ENCODE measurements at regions of chr12 and their contacts with region 1.

Region 1: DNA sequence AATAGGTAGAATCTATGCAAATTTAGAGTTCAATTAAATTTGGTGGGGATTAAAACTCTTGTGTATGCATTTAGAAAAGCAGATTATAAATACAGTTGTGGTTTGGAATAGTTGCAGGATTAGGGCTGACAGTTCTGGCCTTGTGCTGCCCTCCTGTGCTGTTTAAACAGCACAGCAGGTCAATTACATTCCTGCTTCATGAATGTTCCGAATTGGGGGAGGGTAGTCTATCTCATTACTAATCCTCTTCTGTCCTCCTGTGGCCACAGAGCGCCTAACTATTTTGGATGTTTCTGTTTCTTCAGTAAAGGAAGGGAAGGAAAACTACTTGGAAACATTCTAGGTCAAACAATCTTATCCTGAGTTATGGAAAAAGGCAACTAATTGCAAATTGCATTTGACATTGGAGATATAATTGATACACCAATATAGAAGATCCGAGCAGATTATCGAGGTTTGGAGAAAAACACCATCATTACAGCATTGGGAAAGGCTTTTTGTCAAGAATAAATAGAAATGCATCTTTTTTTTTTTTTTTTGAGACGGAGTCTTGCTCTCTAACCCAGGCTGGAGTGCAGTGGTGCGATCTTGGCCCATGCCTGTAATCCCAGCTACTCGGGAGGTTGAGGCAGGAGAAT is 8.7 kb upstream of the GPR19 start:
- DNase-seq: peak; percentile 84
- H3K4me3 ChIP-seq: no peak overlapping the region
- H3K27ac ChIP-seq: no peak overlapping the region
- H3K4me1 ChIP-seq: peaks cover 5% of the 10 kb centered on the region
- H3K27me3 ChIP-seq: no peaks in the 10 kb centered on the region
- CTCF ChIP-seq: peak; percentile 99 to 100

Region 2: GRCh38 chr12:11581179-11581755 is 1123.4 kb before region 1 on chr12:
- CTCF ChIA-PET with region 1: no interaction called
- dilution Hi-C with region 1: no loop called
- in situ Hi-C with region 1: no loop called
- intact Hi-C with region 1: loop called (anchors 1 kb)
- DNase-seq: peak; percentile 52
- H3K4me3 ChIP-seq: no peak overlapping the region
- H3K27ac ChIP-seq: no peak overlapping the region
- H3K4me1 ChIP-seq: peaks cover 24% of the 10 kb centered on the region
- H3K27me3 ChIP-seq: no peaks in the 10 kb centered on the region
- CTCF ChIP-seq: peak; percentile 27 to 48

Region 3: DNA sequence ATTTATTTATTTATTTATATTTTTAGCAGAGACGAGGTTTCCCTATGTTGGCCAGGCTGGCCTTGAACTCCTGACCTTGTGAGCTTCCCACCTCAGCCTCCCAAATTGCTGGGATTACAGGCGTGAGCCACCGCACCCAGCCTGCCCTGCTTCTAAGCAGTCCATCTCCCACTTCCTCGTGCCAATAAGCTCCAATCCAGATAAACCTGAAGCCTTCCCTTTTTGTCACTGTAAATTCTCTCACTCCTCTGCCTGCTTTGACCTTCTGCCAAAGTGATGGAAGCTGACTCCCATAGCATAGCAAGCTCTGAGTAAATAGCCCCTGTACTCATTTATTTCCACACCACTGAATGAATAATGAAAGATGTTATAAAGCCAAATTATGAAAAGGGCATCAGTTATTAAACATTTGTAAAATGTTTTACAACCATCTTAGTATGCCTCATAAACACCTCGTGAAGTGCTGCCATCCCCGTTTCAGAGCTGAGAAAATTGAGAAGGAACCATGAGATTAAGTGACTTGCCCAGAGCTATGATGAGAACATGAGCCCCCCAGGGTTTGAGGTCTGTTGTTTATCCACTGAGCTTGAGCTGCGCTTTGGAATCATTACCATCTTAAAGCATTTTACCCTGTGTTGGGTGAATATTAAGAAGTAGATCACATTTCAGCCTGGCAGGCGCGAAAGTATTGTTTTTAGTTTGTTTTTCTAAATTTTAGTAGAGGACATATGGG is 385.1 kb before region 1 on chr12:
- CTCF ChIA-PET with region 1: no interaction called
- dilution Hi-C with region 1: no loop called
- in situ Hi-C with region 1: no loop called
- intact Hi-C with region 1: no loop called
- DNase-seq: no peak
- H3K4me3 ChIP-seq: no peak overlapping the region
- H3K27ac ChIP-seq: no peak overlapping the region
- H3K4me1 ChIP-seq: no peaks in the 10 kb centered on the region
- H3K27me3 ChIP-seq: no peaks in the 10 kb centered on the region
- CTCF ChIP-seq: no peak

Region 4: GRCh38 chr12:12334367-12335040 is 370.2 kb before region 1 on chr12:
- CTCF ChIA-PET with region 1: no interaction called
- dilution Hi-C with region 1: no loop called
- in situ Hi-C with region 1: no loop called
- intact Hi-C with region 1: loop called (anchors 2 kb)
- DNase-seq: peak; percentile 25
- H3K4me3 ChIP-seq: no peak overlapping the region
- H3K27ac ChIP-seq: no peak overlapping the region
- H3K4me1 ChIP-seq: peaks cover 26% of the 10 kb centered on the region
- H3K27me3 ChIP-seq: no peaks in the 10 kb centered on the region
- CTCF ChIP-seq: peak; percentile 80 to 81

Region 5: DNA sequence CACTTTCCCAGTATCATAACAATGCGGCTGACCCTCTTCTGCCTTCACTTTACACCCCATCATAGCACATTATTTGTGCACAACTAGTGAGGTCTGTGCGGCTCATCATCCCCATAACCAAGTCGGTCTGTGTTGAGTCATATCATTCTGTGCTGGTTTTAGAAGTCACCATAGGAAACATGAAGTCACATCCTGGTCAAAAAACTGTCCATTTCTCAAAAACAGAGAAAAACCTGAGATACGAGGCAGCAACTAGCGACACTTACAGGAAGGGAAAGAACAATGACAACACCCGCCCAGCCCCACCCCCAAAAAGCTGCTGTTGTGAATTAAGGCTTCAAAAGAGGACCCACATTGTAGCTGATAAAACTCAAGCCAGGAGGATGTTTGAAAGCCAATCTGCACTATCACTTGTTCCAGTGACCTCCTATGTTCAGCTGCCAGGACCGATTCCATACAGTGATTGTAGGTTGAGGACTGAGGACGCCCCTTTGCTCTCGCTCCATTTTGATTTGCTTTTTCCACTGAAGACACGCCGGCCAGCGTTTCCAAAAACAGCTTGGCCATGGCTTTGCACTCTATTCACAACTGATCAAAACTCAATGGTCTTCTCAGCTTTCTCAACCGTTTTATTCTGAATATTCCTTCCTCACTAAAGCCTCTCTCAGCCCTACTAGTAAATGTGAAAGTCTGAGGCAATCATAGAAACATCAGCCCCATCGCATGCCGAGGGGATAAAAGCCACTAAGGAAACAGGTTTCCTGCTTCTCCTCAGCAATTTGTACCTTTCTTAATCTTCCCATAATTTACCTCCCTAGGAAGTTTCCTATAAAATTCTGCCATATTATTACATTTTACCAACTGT is 229.5 kb before region 1 on chr12:
- CTCF ChIA-PET with region 1: no interaction called
- dilution Hi-C with region 1: no loop called
- in situ Hi-C with region 1: no loop called
- intact Hi-C with region 1: loop called (anchors 10 kb)
- DNase-seq: no peak
- H3K4me3 ChIP-seq: no peak overlapping the region
- H3K27ac ChIP-seq: no peak overlapping the region
- H3K4me1 ChIP-seq: no peaks in the 10 kb centered on the region
- H3K27me3 ChIP-seq: no peaks in the 10 kb centered on the region
- CTCF ChIP-seq: no peak

Region 6: DNA sequence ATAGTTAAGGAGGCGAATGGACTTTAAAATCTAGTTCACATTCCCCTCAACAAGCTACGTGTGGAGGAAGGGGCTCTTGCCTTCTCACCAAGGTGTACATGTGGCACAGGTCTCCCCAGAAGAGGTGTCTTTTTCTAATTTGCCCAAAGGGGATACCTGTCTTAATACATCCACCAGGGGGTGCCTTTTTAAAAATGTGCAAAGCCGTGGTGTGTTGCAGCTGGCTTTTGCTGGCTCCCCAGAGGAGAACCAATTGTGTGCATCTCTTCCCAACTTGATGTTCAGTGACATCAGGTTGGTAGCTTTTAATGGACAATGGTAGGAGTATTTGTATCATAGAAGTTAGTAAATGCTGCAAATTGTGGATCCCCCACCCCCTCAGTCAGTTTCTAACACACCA is 59.2 kb before region 1 on chr12:
- CTCF ChIA-PET with region 1: no interaction called
- dilution Hi-C with region 1: no loop called
- in situ Hi-C with region 1: no loop called
- intact Hi-C with region 1: no loop called
- DNase-seq: no peak
- H3K4me3 ChIP-seq: no peak overlapping the region
- H3K27ac ChIP-seq: no peak overlapping the region
- H3K4me1 ChIP-seq: no peaks in the 10 kb centered on the region
- H3K27me3 ChIP-seq: no peaks in the 10 kb centered on the region
- CTCF ChIP-seq: peak in 1 of 2 donors; percentile 27

Region 7: DNA sequence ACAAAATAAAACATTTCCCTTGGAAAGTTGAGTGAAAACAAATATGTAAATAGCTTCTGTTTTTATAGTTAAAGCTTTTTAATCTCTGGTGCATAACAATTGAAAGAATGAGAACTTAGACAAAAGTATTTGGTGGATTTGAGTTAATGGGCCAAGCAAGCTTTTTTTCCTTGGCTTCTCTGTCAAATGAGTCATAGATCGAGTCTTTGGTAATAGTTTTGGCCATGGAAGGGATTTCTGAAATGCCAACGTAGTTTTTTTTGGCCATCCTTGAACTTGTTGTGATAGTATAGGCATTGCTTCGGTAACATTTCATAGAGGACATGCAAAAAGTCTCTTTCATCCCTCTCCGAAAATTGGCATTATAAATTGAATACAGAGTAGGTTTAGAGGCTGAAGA is 43.6 kb before region 1 on chr12:
- CTCF ChIA-PET with region 1: no interaction called
- dilution Hi-C with region 1: no loop called
- in situ Hi-C with region 1: no loop called
- intact Hi-C with region 1: loop called (anchors 1 kb)
- DNase-seq: peak; percentile 46
- H3K4me3 ChIP-seq: no peak overlapping the region
- H3K27ac ChIP-seq: no peak overlapping the region
- H3K4me1 ChIP-seq: peaks cover 6% of the 10 kb centered on the region
- H3K27me3 ChIP-seq: no peaks in the 10 kb centered on the region
- CTCF ChIP-seq: no peak

Measured in mammary epithelial cell (primary cell).